ENCODE measurements at regions of chr10 and their contacts with region 1.

Region 1: GRCh38 chr10:117442944-117443685 is 67.9 kb upstream of the PDZD8 start:
- DNase-seq: peak; percentile 67 to 76 (median 73)
- H3K4me3 ChIP-seq: peak overlapping the region in 4 of 7 experiments; percentile 41 to 64 (median 52)
- H3K27ac ChIP-seq: no peak overlapping the region
- H3K4me1 ChIP-seq: peaks cover 0 to 20% (median 17%) of the 10 kb centered on the region in 4 experiments
- H3K27me3 ChIP-seq: no peaks in the 10 kb centered on the region

Region 2: GRCh38 chr10:116857156-116857555 is 586.0 kb before region 1 on chr10:
- CTCF ChIA-PET with region 1: no interaction called
- POLR2A ChIA-PET with region 1: no interaction called
- DNase-seq: no peak
- H3K4me3 ChIP-seq: no peak overlapping the region
- H3K27ac ChIP-seq: no peak overlapping the region
- H3K4me1 ChIP-seq: no peaks in the 10 kb centered on the region
- H3K27me3 ChIP-seq: peaks cover 0 to 2% (median 0%) of the 10 kb centered on the region in 5 experiments

Region 3: GRCh38 chr10:117186832-117187615 is 256.1 kb before region 1 on chr10:
- CTCF ChIA-PET with region 1: no interaction called
- POLR2A ChIA-PET with region 1: no interaction called
- DNase-seq: peak in 2 of 3 donors; percentile 14 to 34
- H3K4me3 ChIP-seq: no peak overlapping the region
- H3K27ac ChIP-seq: no peak overlapping the region
- H3K4me1 ChIP-seq: no peaks in the 10 kb centered on the region
- H3K27me3 ChIP-seq: peaks cover 0 to 11% (median 7%) of the 10 kb centered on the region in 5 experiments

Region 4: GRCh38 chr10:117370205-117370604 is 72.9 kb before region 1 on chr10:
- CTCF ChIA-PET with region 1: interaction called, 10 read pairs
- POLR2A ChIA-PET with region 1: no interaction called
- DNase-seq: no peak
- H3K4me3 ChIP-seq: peak overlapping the region in 4 of 7 experiments; percentile 85 to 97 (median 92)
- H3K27ac ChIP-seq: peak overlapping the region in 1 of 2 experiments; percentile 49
- H3K4me1 ChIP-seq: peaks cover 24 to 71% (median 35%) of the 10 kb centered on the region in 4 experiments
- H3K27me3 ChIP-seq: no peaks in the 10 kb centered on the region

Region 5: GRCh38 chr10:117431160-117431559 is 12.0 kb before region 1 on chr10:
- CTCF ChIA-PET with region 1: interaction called, 42 read pairs
- POLR2A ChIA-PET with region 1: no interaction called
- DNase-seq: peak in 2 of 3 donors; percentile 46 to 59
- H3K4me3 ChIP-seq: peak overlapping the region in 1 of 7 experiments; percentile 11
- H3K27ac ChIP-seq: no peak overlapping the region
- H3K4me1 ChIP-seq: peaks cover 6 to 24% (median 8%) of the 10 kb centered on the region in 4 experiments
- H3K27me3 ChIP-seq: no peaks in the 10 kb centered on the region

Region 6: GRCh38 chr10:117461766-117462423 is 18.8 kb after region 1 on chr10:
- CTCF ChIA-PET with region 1: interaction called, 16 read pairs
- POLR2A ChIA-PET with region 1: no interaction called
- DNase-seq: peak in 2 of 3 donors; percentile 28 to 58
- H3K4me3 ChIP-seq: no peak overlapping the region
- H3K27ac ChIP-seq: no peak overlapping the region
- H3K4me1 ChIP-seq: peaks cover 0 to 21% (median 13%) of the 10 kb centered on the region in 4 experiments
- H3K27me3 ChIP-seq: peaks cover 0 to 19% (median 10%) of the 10 kb centered on the region in 5 experiments

Region 7: GRCh38 chr10:117653170-117653515 is 210.0 kb after region 1 on chr10:
- CTCF ChIA-PET with region 1: no interaction called
- POLR2A ChIA-PET with region 1: no interaction called
- DNase-seq: no peak
- H3K4me3 ChIP-seq: no peak overlapping the region
- H3K27ac ChIP-seq: no peak overlapping the region
- H3K4me1 ChIP-seq: no peaks in the 10 kb centered on the region
- H3K27me3 ChIP-seq: no peaks in the 10 kb centered on the region

Measured in common myeloid progenitor, CD34-positive (primary cell).